ENCODE measurements at regions of chr1 and their contacts with region 1.

Region 1: GRCh38 chr1:212035123-212035834 is at the starts of genes DTL and INTS7:
- DNase-seq: peak; percentile 97 to 98
- H3K4me3 ChIP-seq: peak within 1 kb of the TSS; percentile 93
- H3K27ac ChIP-seq: peak within 1 kb of the TSS; percentile 55
- H3K4me1 ChIP-seq: peaks cover 50% of the 10 kb centered on the region
- H3K27me3 ChIP-seq: no peaks in the 10 kb centered on the region
- CTCF ChIP-seq: peak; percentile 81
- total RNA-seq, gene DTL: 22.5 TPM in 2 replicates
- total RNA-seq, gene INTS7: 18.4 and 24.7 TPM in 2 replicates

Region 2: DNA sequence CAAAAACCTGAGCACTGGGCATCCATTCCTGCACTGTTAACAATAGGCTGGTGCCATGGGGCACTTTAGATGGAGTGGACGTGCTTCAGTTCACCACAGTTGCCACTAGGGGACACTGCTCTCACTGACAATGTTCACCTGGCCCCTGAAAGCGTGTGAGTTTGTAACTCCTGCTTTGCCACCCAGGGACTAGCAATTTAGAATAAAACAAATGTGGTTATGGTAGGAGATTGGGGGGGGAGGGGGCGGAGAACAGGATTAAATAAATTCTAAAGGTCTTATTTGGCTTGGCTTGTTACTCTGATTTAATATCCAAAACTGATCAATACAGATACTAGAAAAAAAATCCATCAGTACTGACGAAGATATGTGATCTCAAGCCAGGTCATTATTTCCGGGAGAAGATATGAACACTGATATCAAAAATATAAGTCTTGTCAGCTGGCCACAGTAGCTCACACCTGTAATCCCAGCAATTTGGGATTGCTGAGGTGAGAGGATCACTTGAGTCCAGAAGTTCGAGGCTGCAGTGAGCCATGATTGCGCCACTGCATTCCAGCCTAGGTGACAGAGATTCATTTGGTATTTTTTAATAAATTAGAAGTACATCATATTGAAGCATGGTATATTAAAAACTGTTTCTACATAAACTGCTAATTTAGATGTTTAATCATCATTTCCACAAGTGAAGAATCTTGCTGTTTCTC is 23.1 kb before region 1 on chr1:
- CTCF ChIA-PET with region 1: interaction called, 7 read pairs
- POLR2A ChIA-PET with region 1: no interaction called
- intact Hi-C with region 1: loop called (anchors 1 kb)
- DNase-seq: peak; percentile 49 to 53
- H3K4me3 ChIP-seq: no peak overlapping the region
- H3K27ac ChIP-seq: no peak overlapping the region
- H3K4me1 ChIP-seq: peaks cover 9% of the 10 kb centered on the region; the same call in 1 of the 2 replicates
- H3K27me3 ChIP-seq: no peaks in the 10 kb centered on the region
- CTCF ChIP-seq: peak; percentile 93

Region 3: GRCh38 chr1:212045981-212046380 is 10.7 kb after region 1 on chr1:
- CTCF ChIA-PET with region 1: no interaction called
- POLR2A ChIA-PET with region 1: no interaction called
- intact Hi-C with region 1: no loop called
- DNase-seq: no peak
- H3K4me3 ChIP-seq: no peak overlapping the region
- H3K27ac ChIP-seq: no peak overlapping the region
- H3K4me1 ChIP-seq: no peaks in the 10 kb centered on the region
- H3K27me3 ChIP-seq: no peaks in the 10 kb centered on the region
- CTCF ChIP-seq: no peak

Measured in PC-9 (cell line).